ENCODE measurements at regions of chr20 and their contacts with region 1.

Region 1: DNA sequence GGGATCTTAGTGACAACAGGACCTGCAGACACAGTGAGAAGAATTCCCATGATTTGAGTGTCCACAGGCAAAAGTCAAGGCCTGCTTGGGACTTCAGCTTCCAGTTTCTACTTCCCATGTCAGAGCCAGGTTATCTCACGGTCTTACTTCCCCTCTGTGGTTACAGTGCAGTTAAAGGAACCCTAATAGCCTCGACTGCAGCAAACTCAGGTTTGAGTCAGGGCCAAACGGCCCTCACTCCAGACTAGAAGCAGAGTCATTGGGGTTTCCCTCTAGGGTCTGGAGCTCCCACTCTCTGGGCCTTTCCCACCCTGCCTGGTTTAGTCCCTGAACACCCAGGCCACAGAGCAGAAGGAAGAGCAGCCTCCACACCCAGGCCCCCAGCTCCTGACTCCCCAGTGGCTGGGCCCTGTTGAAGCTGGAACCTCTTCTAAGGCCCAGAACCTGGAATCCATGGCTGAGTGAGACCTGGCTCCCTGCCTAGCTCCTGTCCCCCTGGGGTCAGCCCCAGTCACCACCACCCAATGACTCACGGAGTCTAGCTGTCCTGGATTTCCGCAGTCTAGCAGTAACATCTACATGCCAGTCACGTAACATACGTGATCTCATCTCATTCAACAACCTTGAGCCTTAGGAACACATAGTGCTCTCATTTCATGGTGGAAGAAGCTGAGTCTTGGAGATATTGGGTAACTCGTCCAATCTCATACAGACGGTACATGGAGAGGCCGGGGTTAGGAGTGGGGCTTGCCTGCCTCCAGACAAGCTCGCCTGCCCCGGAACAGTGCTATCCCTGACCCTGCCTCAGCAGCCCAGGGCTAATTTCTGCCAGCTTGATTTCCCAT is 9.2 kb upstream of the GHRH start:
- DNase-seq: peak; percentile 62
- CTCF ChIP-seq: no peak

Region 2: DNA sequence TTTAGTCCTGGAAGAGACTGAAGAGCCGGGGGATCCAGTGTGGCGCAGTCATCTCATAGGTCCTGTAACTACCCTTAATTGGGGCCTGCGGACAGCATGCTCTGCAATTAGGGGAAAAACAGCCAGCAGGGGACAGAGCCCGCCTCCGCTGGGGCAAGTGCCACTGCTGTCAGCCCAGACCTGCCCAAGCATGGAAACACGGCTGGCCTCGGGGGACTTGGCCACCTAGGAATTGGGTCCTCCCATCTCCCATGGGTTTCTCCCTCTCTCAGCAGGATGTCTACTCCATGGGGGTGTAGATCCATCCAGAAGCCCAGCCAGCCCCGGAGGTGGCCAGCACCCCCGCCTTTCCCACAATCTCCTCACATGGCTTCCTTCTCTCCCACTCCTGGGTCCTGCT is 12.8 kb before region 1 on chr20:
- CTCF ChIA-PET with region 1: interaction called, 26 read pairs
- POLR2A ChIA-PET with region 1: no interaction called
- DNase-seq: no peak
- CTCF ChIP-seq: no peak

Region 3: DNA sequence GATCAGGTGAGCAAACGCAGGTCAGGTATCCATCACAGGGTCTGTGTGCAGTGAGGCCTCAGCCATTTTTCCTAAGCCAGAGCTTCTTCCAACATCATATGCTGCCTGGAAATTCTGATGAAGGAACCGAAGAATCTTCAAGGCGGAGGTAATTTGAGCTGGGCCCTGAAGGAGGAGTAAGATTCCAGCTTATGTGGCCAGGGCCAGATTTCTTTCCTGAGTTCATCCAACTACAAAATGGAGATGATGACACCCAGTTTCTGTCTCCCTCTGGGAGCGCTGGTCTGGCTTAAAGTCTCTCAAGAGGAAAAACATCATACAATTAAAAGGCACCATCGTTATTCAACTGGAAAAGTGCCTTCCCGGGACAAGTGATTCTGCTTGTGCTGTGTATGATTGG is 11.8 kb after region 1 on chr20:
- CTCF ChIA-PET with region 1: interaction called, 110 read pairs
- POLR2A ChIA-PET with region 1: no interaction called
- DNase-seq: no peak
- CTCF ChIP-seq: no peak

Region 4: GRCh38 chr20:37303647-37304046 is 32.8 kb after region 1 on chr20:
- CTCF ChIA-PET with region 1: interaction called, 11 read pairs
- POLR2A ChIA-PET with region 1: no interaction called
- DNase-seq: no peak
- CTCF ChIP-seq: no peak

Region 5: GRCh38 chr20:37336369-37337207 is 65.8 kb after region 1 on chr20:
- CTCF ChIA-PET with region 1: interaction called, 11 read pairs
- POLR2A ChIA-PET with region 1: no interaction called
- DNase-seq: peak; percentile 87
- CTCF ChIP-seq: no peak

Region 6: DNA sequence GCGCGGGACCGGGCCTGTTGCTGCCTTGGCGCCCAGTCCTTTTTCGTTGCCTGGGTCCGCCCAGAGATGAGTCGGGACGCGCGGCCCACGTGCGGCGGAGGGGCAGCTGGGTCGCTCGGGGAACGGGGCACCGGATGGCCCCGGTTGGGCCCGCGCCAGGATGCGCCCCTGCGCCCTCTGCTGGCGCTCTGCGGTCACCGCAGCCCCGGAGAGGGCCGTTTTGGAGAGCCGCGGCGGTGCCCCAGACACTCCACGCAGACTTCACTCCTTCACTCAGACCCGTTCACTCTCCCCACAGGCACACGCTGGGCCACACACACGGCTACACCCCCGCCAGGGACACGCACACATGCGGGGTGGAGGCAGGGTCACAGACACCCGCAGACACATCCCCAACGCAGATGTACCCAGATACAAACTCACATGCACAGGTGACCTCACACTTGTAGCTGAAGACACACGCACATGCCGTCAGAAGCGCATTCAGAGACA is 113.9 kb after region 1 on chr20:
- CTCF ChIA-PET with region 1: interaction called, 116 read pairs
- POLR2A ChIA-PET with region 1: no interaction called
- DNase-seq: peak; percentile 89
- CTCF ChIP-seq: peak; percentile 94

Region 7: GRCh38 chr20:37534401-37535157 is 263.8 kb after region 1 on chr20:
- CTCF ChIA-PET with region 1: interaction called, 153 read pairs
- POLR2A ChIA-PET with region 1: no interaction called
- DNase-seq: peak; percentile 77
- CTCF ChIP-seq: peak; percentile 68

Measured in GM10248 (cell line).